ENCODE measurements at regions of chr17 and their contacts with region 1.

Region 1: DNA sequence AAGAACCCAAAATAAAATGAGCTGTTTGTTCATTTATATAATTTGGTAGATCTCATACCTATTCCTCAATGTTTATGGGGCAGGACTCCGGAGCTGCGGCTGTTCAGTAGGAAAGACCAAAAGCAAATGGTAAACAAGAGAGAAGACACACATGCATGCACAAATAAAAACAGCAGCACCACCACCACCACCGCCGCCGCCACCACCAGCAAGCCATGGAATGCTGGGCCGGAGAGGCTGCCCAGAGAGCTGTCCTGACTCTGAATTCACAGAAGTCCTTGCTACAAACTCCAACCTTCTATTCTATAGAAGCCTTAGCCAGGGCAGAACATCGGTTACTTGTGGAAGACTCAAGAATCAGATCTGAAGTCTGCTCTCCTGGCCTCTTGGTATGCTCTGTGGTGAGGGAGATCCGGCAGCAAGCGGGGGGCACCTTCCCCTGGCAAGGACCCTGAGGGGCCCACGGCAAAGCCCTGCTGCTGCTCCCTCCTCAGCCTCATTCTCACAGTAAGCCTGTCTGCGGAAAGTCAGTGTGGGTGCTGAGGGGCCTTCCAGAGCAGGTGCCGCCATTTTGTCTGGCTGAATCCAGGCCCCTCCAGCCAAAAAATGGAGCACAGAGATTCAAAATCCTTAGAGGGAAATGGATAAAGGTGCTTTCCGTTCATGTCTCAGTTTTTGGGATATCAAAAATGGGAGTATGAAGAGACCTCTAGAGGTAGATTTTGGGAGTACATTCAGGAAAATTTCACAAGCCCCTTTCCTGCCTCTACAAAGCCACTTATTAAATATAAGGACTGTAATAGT is 6.4 kb upstream of the FOXJ1 start:
- DNase-seq: no peak
- ATAC-seq: no peak
- H3K4me3 Mint-ChIP-seq: no peak overlapping the region
- H3K27ac Mint-ChIP-seq: peak overlapping the region; percentile 96 to 100 (median 98)
- H3K4me1 Mint-ChIP-seq: peaks cover 33 to 87% (median 75%) of the 10 kb centered on the region in 4 donors
- H3K27me3 Mint-ChIP-seq: no peaks in the 10 kb centered on the region

Region 2: DNA sequence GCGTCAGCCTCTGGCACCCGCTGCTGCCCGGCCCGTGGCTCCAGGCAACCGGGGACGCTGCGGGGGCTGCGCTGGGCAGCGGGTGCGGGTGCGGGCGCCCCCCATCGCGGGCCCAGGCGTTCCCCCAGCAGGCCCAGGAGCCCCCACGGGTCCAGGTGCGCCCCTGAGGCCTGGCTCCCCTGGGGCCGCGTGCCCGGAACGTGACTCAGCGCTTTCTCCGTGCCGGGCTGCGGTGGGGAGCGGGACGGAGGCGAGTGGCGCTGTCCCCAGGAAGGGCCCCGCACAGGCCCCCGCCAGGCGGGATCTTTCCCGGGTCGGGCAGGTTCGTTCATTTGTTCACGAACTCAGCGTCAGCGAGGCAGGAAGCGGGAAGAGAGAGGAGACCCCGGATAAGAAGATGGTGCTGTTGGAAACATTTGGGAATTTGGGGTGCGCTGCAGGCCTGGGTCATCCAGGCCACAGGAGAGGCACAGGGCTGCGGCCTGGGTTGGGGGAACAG is 25.4 kb before region 1 on chr17:
- POLR2A ChIA-PET with region 1: interaction called, 31 read pairs
- DNase-seq: no peak
- ATAC-seq: peak; percentile 13 to 37
- H3K4me3 Mint-ChIP-seq: peak overlapping the region; percentile 28 to 78 (median 63)
- H3K27ac Mint-ChIP-seq: peak overlapping the region in 8 of 10 donors; percentile 46 to 90 (median 80)
- H3K4me1 Mint-ChIP-seq: peaks cover 18 to 40% (median 31%) of the 10 kb centered on the region in 4 donors
- H3K27me3 Mint-ChIP-seq: no peaks in the 10 kb centered on the region

Region 3: DNA sequence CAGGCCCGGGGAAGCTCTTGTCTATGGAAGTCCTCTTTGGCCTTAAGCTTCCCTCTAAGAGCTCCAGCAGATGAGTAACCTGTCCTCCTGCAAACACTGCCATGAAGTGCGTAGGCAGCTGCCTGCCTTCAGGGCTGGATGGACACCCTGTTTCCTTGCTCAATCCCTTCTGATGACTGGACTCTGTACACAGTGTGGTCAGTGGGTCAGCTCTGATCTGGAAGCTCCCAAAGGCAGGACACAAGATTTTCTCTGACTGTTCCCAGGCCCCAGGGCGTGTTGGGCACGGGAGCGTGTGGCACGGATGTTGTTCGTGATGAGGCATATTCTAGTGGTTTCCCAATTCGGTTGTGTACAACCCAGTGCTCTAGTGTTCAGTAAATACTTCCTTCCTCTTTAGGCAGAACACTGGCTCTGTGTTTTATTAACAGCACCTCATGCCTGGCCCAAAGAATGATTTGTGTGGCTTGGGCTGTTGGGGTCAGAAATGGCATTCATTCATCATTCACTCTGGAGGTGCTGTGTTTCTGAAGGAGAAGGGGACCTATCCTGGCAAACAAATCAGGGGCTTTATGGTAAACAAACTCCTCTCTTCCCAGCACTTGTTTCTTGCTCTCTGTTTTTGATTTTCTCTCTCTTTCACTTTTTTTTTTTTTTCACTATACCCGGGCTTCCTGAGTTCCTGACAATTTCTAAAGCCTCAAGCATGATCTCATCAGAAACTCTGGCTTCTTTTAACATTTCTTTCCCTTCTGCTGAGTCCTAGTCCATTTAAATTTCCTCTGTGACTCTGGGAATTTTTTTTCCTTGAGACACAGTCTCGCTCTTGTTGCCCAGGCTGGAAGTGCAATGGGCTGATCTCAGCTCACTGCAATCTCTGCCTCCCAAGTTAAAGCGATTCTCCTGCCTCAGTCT is 104.9 kb after region 1 on chr17:
- POLR2A ChIA-PET with region 1: interaction called, 17 read pairs
- DNase-seq: peak in 4 of 10 donors; percentile 26 to 56 (median 48)
- ATAC-seq: peak; percentile 48 to 71
- H3K4me3 Mint-ChIP-seq: peak overlapping the region; percentile 63 to 86 (median 77)
- H3K27ac Mint-ChIP-seq: peak overlapping the region; percentile 90 to 98 (median 92)
- H3K4me1 Mint-ChIP-seq: peaks cover 33 to 69% (median 66%) of the 10 kb centered on the region in 4 donors
- H3K27me3 Mint-ChIP-seq: no peaks in the 10 kb centered on the region

Measured in naive thymus-derived CD8-positive, alpha-beta T cell (primary cell).